Right ventricle myocardium inferior (tissue), 1 donor: ENCODE measurements at regions of chr17 and their contacts with region 1.

Region 1: DNA sequence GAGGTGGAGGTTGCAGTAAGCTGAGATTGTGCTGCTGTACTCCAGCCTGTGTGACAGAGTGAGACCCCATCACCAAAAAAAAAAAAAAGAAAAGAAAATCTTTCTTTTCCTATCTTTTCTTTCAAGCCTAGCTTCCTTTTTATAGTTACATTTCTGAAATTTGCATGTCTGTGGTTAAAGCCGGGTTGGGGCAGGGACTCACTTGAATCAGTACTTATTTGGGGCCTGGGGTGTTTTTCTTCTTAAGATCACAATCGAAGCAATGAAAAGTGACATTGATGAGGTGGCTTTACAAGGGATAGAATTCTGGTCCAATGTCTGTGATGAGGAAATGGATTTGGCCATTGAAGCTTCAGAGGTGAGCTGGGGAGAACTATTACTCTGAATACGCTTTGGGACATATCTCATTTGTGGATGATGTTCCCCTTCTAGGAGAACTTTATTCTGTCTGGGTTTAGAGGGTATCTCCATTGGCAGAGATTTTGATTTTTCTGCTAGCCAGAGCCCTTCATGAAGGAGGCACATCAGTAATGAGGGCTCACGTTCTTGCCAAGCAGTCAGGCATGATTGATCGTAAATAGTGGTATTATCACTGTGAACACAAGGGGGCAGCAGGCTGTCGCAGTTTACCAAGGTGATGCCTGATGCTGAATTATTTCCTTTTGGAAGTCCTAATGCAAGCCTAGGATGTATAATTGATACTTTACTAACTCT is 14.3 kb downstream of the KPNB1 start:
- DNase-seq: no peak
- ATAC-seq: peak; percentile 50

Region 2: DNA sequence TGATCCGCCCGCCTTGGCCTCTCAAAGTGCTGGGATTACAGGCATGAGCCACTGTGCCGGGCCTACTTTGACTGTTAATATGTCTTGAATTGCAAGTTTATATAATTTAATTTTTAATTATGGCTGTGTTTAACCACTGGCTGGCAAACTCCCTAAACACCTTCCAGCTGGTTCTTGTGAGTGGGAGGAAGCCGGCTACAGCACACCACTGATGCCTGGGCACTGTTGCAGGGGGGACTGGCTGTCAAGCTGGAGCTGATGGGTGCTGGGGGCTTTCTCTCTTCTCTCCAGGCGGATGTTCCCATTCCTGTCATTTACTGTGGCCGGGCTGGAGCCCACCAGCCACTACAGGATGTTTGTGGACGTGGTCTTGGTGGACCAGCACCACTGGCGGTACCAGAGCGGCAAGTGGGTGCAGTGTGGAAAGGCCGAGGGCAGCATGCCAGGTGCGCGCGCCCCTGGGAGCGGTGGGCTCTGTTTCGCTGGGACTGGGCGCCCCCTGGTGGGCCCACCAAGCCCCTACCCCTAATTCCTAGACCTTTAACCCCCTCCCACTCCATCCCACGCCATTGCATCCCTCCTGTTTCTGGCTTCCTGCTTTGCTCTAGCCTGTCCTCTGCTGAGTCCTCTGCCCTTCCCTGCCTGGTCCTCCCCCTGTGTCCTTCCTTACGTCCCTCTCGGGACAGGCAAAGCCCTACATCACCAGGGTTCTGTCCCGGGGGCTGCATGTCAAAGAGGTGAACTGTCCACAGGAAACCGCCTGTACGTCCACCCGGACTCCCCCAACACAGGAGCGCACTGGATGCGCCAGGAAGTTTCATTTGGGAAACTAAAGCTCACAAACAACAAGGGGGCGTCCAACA is 78.5 kb after region 1 on chr17:
- intact Hi-C with region 1: loop called (anchors 10 kb)
- DNase-seq: no peak
- ATAC-seq: no peak

Region 3: GRCh38 chr17:47789611-47790561 is 125.8 kb after region 1 on chr17:
- intact Hi-C with region 1: loop called (anchors 5 kb)
- DNase-seq: peak; percentile 74
- ATAC-seq: peak; percentile 52